IMR-90 (cell line): ENCODE measurements at regions of chr2 and their contacts with region 1.

Region 1: DNA sequence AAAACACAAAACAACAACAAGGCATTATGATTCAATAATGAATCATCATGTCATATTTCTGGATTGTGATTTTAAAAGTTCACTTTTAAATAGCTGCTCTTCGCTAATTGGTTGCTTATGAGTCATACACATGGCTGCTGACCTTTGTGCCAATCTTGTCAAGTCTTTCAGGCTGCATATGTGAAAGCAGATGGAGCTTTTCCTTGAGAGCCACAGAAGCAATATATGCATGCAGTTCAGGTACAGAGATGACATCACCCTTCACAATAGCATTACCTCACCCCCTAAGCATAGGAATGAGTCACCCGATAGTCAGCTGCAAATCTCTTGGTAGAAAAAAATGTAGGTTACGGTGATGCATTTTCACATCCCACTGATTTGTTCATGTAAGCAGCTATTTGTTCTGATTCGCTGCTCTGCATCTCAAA is 27.2 kb downstream of the EIF2AK3 start:
- DNase-seq: peak; percentile 99
- ATAC-seq: peak; percentile 80
- H3K4me3 ChIP-seq: no peak overlapping the region
- H3K27ac ChIP-seq: no peak overlapping the region
- H3K4me1 ChIP-seq: peaks cover 9% of the 10 kb centered on the region
- H3K27me3 ChIP-seq: no peaks in the 10 kb centered on the region
- CTCF ChIP-seq: no peak
- POLR2A ChIP-seq: no peak
- RAD21 ChIP-seq: no peak

Region 2: DNA sequence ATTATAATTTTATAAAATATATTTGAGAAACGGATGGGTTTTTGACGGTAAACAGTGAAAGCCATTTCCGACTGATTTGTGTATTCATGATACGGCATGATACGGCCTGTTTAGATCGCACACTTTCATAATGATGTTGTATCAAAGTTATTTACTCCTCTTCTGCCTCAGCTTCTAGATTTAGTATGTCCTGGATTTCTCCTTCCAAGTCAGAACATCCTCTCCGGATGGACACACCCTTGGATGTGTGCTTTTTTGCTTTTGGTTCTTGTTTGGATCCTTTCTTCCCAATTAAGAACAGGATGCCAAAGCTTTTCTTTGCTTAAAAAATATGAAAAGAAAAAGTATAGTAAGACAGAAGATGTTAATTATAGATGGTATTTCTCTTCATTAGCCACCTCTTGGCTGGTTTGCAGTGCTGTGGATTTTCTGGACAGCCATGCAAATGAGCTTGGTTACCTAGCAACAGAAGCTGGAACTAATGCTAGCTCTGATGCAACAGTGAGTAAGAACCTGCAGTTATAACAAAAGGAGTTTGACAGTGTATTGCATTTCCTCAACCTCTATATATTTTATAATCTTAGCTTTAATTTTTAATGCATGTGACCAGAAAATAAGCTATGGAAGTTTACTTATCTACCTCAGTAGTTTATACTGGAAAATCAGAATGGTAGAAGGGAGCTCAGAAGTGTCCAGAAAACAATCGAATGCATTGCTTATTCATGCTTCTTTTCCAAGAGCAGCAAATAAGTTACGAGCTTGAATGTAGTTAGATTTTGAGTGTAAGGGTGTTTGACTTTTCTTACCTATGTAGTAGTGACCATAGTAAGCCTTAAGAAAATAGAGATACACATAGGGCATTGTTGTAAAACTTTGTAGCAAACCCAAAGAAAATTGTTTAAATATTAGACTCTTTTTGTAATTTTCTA is 1852.1 kb before region 1 on chr2:
- CTCF ChIA-PET with region 1: no interaction called
- POLR2A ChIA-PET with region 1: no interaction called
- dilution Hi-C with region 1: no loop called
- in situ Hi-C with region 1: no loop called
- intact Hi-C with region 1: loop called (anchors 5 kb)
- DNase-seq: peak; percentile 90
- ATAC-seq: peak; percentile 75
- H3K4me3 ChIP-seq: no peak overlapping the region
- H3K27ac ChIP-seq: peak overlapping the region; percentile 46; the same call in 1 of the 2 replicates
- H3K4me1 ChIP-seq: no peaks in the 10 kb centered on the region
- H3K27me3 ChIP-seq: no peaks in the 10 kb centered on the region
- CTCF ChIP-seq: no peak
- POLR2A ChIP-seq: no peak
- RAD21 ChIP-seq: no peak

Region 3: GRCh38 chr2:88614497-88615157 is 14.6 kb after region 1 on chr2:
- CTCF ChIA-PET with region 1: no interaction called
- POLR2A ChIA-PET with region 1: no interaction called
- dilution Hi-C with region 1: no loop called
- in situ Hi-C with region 1: no loop called
- intact Hi-C with region 1: no loop called
- DNase-seq: no peak
- ATAC-seq: no peak
- H3K4me3 ChIP-seq: no peak overlapping the region
- H3K27ac ChIP-seq: no peak overlapping the region
- H3K4me1 ChIP-seq: peaks cover 10% of the 10 kb centered on the region; the same call in 1 of the 2 replicates
- H3K27me3 ChIP-seq: no peaks in the 10 kb centered on the region
- CTCF ChIP-seq: no peak
- POLR2A ChIP-seq: no peak
- RAD21 ChIP-seq: no peak

Region 4: DNA sequence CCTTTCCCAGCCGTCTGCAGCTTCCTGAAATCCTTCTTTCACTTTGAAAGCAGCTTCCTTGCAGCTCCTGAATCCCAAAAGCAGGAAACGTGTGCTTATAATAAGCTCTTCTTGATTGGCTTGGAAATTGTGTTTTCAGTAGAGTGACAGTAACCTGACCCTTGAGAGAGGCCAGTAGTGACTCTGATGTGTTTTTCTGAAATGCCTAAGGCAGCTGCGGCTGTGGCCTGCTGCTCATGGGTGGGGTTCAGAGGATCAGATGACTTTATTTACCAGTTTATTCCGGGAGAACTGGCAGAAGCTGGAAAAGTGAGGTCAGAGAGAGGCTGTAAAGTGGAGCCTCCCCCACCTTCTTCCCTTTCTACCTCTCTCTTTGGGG is 59.5 kb after region 1 on chr2:
- CTCF ChIA-PET with region 1: no interaction called
- POLR2A ChIA-PET with region 1: no interaction called
- dilution Hi-C with region 1: no loop called
- in situ Hi-C with region 1: no loop called
- intact Hi-C with region 1: loop called (anchors 5 kb)
- DNase-seq: peak; percentile 71
- ATAC-seq: peak; percentile 65
- H3K4me3 ChIP-seq: peak overlapping the region; percentile 2; the same call in 1 of the 2 replicates
- H3K27ac ChIP-seq: peak overlapping the region; percentile 95; the same call in 1 of the 2 replicates
- H3K4me1 ChIP-seq: peaks cover 10% of the 10 kb centered on the region
- H3K27me3 ChIP-seq: no peaks in the 10 kb centered on the region
- CTCF ChIP-seq: no peak
- POLR2A ChIP-seq: no peak
- RAD21 ChIP-seq: no peak

Region 5: DNA sequence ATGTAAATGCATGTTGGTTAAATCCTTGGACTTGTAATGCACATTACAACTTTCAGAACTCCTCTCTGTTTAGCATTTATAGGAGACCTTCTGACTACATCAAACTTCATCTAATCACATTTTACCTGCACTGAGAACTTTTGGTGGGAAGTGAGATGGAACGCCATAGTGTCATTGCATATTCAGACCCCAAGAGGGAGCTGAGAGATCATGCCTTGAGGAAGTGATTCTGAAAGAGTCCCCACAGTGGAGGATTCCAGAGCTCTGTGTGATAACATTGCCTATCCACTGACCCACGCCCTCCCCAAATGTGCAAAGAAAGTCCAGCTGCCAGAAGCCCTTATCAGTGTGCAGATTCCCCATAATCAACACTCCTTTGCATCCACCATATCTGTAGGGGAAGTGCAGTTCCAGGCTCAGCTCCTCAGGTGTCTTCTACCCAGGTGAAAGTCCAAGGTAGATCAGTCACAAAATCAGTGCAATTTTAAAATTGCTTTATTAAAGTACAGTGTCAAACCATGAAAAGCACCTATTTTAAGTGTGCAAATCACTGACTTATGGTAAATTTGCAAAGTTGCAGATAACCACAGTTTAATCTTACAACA is 303.8 kb after region 1 on chr2:
- CTCF ChIA-PET with region 1: no interaction called
- POLR2A ChIA-PET with region 1: no interaction called
- dilution Hi-C with region 1: no loop called
- in situ Hi-C with region 1: no loop called
- intact Hi-C with region 1: no loop called
- DNase-seq: peak; percentile 13
- ATAC-seq: peak; percentile 88
- H3K4me3 ChIP-seq: no peak overlapping the region
- H3K27ac ChIP-seq: no peak overlapping the region
- H3K4me1 ChIP-seq: no peaks in the 10 kb centered on the region
- H3K27me3 ChIP-seq: no peaks in the 10 kb centered on the region
- CTCF ChIP-seq: peak; percentile 57
- POLR2A ChIP-seq: no peak
- RAD21 ChIP-seq: peak; percentile 69